ENCODE measurements at regions of chr1 and their contacts with region 1.

Region 1: DNA sequence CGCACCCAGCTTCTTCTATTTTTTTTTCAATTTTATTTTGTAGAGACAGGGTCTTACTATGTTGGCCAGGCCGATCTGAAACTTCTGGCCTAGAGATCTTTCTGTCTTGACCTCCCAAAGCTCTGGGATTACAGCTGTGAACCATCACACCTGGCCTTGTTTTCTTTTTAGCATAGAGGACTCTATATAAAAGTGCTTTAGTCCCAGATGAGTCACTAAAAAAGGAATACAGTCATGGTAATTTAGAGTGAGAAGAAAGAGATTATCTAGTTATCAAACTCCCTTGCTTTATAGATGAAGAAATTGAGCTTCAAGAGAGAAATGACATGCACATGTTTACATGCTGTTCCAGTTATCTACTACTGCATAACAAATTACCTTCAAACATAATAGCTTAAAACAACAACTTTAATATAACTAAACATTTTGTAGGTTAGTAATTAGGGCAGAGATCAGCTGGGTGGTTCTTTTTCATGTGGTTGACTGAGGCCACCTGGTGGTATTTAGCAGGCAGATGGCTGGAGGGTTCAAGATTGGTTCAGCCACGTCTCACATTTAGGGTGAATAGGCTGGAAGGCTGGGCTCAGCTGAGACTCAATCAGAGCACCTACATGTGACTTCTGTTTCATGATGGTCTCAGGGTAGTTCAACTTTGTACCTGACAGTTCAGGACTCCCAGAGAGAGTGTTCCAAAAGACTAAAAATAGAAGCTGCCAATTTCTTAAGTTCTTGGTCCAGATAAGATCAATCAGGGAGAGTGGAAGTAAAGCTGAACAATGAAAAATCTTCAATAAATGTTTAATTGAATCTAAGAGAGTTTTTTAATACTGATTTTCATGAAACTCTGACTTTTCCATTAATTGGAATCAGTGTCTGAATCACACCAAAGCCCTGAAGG is 16.9 kb upstream of the MTF2 start:
- DNase-seq: peak in 4 of 7 donors; percentile 15 to 32 (median 24)
- H3K4me3 ChIP-seq: no peak overlapping the region
- H3K27ac ChIP-seq: no peak overlapping the region
- H3K4me1 ChIP-seq: no peaks in the 10 kb centered on the region
- H3K27me3 ChIP-seq: no peaks in the 10 kb centered on the region
- CTCF ChIP-seq: peak; percentile 19 to 57 (median 48)
- POLR2A ChIP-seq: no peak

Region 2: DNA sequence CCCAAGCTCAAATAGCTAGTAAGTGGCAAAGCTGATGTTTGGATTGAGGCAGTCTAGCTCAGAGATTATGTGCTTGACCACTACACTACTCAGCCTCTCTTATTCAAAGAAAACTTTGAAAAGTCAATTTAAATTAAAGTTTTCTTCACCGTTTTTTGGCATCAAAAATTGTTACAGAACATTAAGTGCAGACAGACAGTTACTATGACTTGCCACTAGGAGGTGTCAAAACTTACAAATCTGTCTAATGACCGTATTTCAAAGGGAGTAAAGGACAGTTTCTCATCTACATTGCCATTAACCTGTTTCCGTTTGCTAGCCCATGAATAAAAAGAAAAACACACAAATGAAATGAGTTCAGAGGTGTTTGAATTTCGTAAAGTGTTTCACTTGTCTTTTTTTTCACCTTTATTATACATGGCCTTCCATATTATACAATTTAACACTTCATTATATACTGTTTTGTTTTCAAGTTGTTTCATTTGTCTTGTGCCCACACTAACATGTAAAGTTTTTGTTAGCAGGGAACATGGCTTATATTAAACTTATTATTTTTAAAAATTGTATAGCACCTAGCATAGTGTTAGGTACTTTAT is 40.5 kb before region 1 on chr1:
- intact Hi-C with region 1: loop called in 1 of 2 experiments (anchors 5 kb)
- DNase-seq: peak in 1 of 7 donors; percentile 11
- H3K4me3 ChIP-seq: no peak overlapping the region
- H3K27ac ChIP-seq: no peak overlapping the region
- H3K4me1 ChIP-seq: no peaks in the 10 kb centered on the region
- H3K27me3 ChIP-seq: no peaks in the 10 kb centered on the region
- CTCF ChIP-seq: peak; percentile 54 to 86 (median 72)
- POLR2A ChIP-seq: no peak